Vagina (tissue), 2 donors: ENCODE measurements at regions of chr3 and their contacts with region 1.

Region 1: DNA sequence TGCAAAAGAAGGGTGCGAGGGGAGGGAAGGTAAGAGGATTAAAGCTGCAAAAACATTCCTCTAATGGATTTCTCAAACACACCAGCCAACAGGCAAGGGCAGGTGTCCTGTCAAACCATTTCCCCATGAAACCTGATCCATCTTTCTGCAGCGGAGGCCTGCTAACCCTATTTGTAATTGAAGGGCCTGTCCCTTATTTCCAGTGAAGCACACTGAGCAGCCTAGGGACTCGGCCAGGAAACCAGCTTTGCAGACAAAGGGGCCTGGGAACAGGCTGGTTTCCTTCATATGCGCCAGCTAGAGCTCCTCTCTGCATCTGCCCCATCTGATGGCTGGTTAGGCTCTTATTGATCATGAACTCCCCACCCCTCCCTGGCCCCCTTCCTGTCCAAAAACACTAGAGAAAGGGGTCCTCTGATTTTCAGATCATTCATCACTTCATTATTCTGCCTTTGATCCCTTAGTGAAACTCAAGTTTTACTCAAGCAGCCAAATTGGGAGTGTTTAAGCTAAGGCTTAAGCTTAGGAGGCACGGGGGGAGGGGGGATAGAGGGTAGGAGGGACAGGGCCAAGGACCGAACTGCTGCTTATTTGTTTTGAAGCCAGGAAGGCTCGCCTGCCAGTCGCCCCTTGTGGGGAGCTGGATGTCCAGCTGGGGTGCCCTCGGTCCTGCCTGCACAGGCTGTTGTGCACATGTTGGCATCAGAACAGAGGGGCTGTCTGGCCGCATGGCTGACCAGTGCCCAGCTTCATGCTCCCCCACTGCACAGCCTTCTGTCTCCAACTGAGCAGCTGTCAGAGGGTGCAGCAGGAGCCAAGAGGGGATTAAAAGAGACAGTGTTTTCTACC is 53.1 kb downstream of the BOC start:
- DNase-seq: no peak
- H3K4me3 ChIP-seq: no peak overlapping the region
- H3K27ac ChIP-seq: peak overlapping the region; percentile 3
- H3K4me1 ChIP-seq: peaks cover 33% of the 10 kb centered on the region
- H3K27me3 ChIP-seq: no peaks in the 10 kb centered on the region
- CTCF ChIP-seq: no peak
- POLR2A ChIP-seq: no peak

Region 2: DNA sequence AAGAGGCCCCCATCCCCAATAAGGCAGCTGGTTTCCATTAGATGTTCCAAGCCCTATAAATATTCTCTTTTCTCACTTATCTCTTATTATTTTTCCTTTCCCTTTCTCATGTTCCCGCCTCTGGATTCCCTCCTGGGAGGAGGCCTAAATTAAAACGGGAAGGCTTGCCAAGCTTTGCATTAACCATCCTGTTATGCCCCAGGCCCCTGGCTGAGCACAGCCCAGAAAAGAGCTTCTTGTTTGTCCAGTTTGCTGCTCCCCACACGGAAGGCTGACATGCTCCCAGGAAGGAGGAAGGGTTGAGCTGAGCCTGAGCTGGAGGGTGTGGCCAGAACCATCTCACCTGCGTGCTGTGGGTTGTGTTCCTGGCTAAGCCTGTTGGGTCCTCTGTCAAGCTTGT is 116.2 kb before region 1 on chr3:
- intact Hi-C with region 1: loop called (anchors 5 kb)
- DNase-seq: no peak
- H3K4me3 ChIP-seq: peak overlapping the region in 1 of 2 donors; percentile 10
- H3K27ac ChIP-seq: peak overlapping the region; percentile 64
- H3K4me1 ChIP-seq: peaks cover 64% of the 10 kb centered on the region
- H3K27me3 ChIP-seq: no peaks in the 10 kb centered on the region
- CTCF ChIP-seq: no peak
- POLR2A ChIP-seq: no peak